ENCODE measurements at regions of chr2 and their contacts with region 1.

Region 1: DNA sequence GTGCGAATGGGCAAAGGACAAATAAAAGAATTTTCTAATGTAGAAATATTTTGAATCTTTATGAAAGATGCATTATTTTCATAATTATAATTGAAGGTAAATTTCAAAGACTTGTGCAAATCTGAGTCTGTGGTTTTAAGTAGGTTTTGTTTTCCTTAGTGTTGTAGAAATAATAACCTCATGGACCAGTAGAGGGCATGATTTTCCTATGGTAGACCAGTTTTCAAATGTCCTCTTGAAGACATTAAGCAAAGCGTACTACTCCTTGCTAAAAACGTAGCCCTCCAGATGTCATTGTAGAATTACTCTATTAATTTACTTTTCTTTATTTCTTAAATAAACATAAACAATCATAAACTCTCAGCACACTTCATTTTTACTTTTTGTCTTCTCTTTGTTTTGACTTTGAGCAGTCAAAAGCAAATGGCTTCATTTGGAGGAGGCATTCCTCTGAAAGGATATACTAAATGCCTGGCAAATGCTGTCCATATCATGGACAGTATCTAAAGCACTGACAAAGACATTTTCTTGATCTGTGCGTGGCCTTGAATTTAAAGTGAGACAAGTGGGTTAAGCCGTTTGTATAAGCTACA is 85.8 kb upstream of the FAM237A start:
- DNase-seq: no peak
- H3K4me3 ChIP-seq: no peak overlapping the region
- H3K27ac ChIP-seq: no peak overlapping the region
- H3K4me1 ChIP-seq: peaks cover 31% of the 10 kb centered on the region
- H3K27me3 ChIP-seq: no peaks in the 10 kb centered on the region
- CTCF ChIP-seq: peak; percentile 68

Region 2: GRCh38 chr2:206442833-206443734 is 113.4 kb before region 1 on chr2 and contains the start of gene ADAM23:
- CTCF ChIA-PET with region 1: no interaction called
- POLR2A ChIA-PET with region 1: no interaction called
- intact Hi-C with region 1: loop called (anchors 2 kb)
- DNase-seq: peak in 1 of 2 experiments; percentile 54
- H3K4me3 ChIP-seq: peak within 1 kb of the TSS; percentile 62
- H3K27ac ChIP-seq: no peak within 1 kb of the TSS
- H3K4me1 ChIP-seq: peaks cover 18% of the 10 kb centered on the region
- H3K27me3 ChIP-seq: no peaks in the 10 kb centered on the region
- CTCF ChIP-seq: no peak
- total RNA-seq, gene ADAM23: 8.9 and 12.0 TPM in 2 replicates

Region 3: GRCh38 chr2:206471524-206472062 is 84.9 kb before region 1 on chr2:
- CTCF ChIA-PET with region 1: no interaction called
- POLR2A ChIA-PET with region 1: no interaction called
- intact Hi-C with region 1: no loop called
- DNase-seq: no peak
- H3K4me3 ChIP-seq: no peak overlapping the region
- H3K27ac ChIP-seq: no peak overlapping the region
- H3K4me1 ChIP-seq: no peaks in the 10 kb centered on the region
- H3K27me3 ChIP-seq: no peaks in the 10 kb centered on the region
- CTCF ChIP-seq: no peak

Region 4: GRCh38 chr2:206693399-206694137 is 137.1 kb after region 1 on chr2:
- CTCF ChIA-PET with region 1: interaction called, 3 read pairs
- POLR2A ChIA-PET with region 1: no interaction called
- intact Hi-C with region 1: loop called (anchors 10 kb)
- DNase-seq: peak; percentile 14 to 36
- H3K4me3 ChIP-seq: no peak overlapping the region
- H3K27ac ChIP-seq: no peak overlapping the region
- H3K4me1 ChIP-seq: no peaks in the 10 kb centered on the region
- H3K27me3 ChIP-seq: no peaks in the 10 kb centered on the region
- CTCF ChIP-seq: peak; percentile 72

Region 5: DNA sequence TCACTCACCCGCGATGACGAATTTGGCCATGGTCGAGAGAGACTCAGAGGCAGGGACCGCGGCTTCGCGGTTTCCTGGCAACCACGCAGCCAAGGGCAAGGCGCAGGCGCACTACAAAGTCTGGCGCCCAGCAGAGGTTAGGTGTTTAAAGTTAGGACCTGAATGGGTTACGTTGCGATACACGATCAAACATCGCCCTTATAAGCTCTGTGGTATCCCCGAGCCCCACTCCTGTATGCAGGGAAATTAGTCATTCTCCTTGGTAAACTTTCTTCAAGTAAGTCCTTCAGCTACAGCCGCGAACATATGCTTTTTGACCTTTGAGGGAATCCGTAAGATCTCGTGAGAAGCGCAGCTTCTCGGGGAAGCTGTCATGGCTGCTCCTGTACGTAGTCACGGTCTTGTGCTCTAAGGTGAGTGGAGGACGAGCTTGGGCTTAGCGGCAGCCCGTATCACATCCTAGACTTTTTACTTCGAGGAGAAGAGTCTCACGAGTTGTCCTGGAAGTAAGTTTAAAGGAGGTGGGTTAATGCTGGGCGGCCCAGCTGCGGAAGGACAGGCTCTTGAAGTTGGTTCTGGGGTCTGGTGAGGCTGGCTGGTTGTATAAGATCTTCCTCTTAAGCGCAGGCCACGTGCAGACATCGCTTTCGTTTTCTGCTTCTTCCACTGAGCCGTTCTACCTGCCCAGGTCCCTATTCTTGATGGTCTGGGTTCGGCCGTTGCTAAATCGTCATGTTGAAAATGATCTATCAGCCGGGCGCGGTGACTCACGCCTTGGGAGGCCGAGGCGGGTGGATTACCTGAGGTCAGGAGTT is 209.0 kb after region 1 on chr2 and contains the starts of genes FASTKD2 and MDH1B:
- CTCF ChIA-PET with region 1: no interaction called
- POLR2A ChIA-PET with region 1: no interaction called
- intact Hi-C with region 1: loop called (anchors 5 kb)
- DNase-seq: peak; percentile 73 to 79
- H3K4me3 ChIP-seq: peak within 1 kb of the TSS; percentile 82
- H3K27ac ChIP-seq: peak within 1 kb of the TSS; percentile 74
- H3K4me1 ChIP-seq: peaks cover 16% of the 10 kb centered on the region
- H3K27me3 ChIP-seq: no peaks in the 10 kb centered on the region
- CTCF ChIP-seq: no peak
- total RNA-seq, gene FASTKD2: 12.0 and 12.1 TPM in 2 replicates
- total RNA-seq, gene MDH1B: 2.7 and 4.1 TPM in 2 replicates

Region 6: GRCh38 chr2:206783718-206784117 is 227.3 kb after region 1 on chr2:
- CTCF ChIA-PET with region 1: no interaction called
- POLR2A ChIA-PET with region 1: no interaction called
- intact Hi-C with region 1: loop called (anchors 2 kb)
- DNase-seq: no peak
- H3K4me3 ChIP-seq: no peak overlapping the region
- H3K27ac ChIP-seq: no peak overlapping the region
- H3K4me1 ChIP-seq: no peaks in the 10 kb centered on the region
- H3K27me3 ChIP-seq: no peaks in the 10 kb centered on the region
- CTCF ChIP-seq: peak; percentile 42; the same call in 1 of the 2 replicates